ENCODE measurements at regions of chr6 and their contacts with region 1.

Region 1: GRCh38 chr6:28863604-28864320 is 60.0 kb downstream of the TRIM27 start:
- DNase-seq: peak; percentile 72
- ATAC-seq: peak; percentile 47
- H3K4me3 ChIP-seq: peak overlapping the region; percentile 62 to 78 (median 63)
- H3K27ac ChIP-seq: peak overlapping the region; percentile 56
- H3K4me1 ChIP-seq: peaks cover 39% of the 10 kb centered on the region
- H3K27me3 ChIP-seq: peaks cover 0 to 11% of the 10 kb centered on the region in 2 experiments; a peak in 4 of 5 replicates
- CTCF ChIP-seq: no peak; the same call in 1 of the 2 replicates
- EP300 ChIP-seq: no peak
- POLR2A ChIP-seq: 0 out of 4 replicates have a peak, but pooled peaks of 1 of the 2 experiments have one; percentile 31
- RAD21 ChIP-seq: peak; percentile 14; the same call in 1 of the 2 replicates

Region 2: GRCh38 chr6:28880894-28881780 is 17.4 kb after region 1 on chr6:
- CTCF ChIA-PET with region 1: no interaction called
- POLR2A ChIA-PET with region 1: interaction called, 26 read pairs
- in situ Hi-C with region 1: no loop called
- intact Hi-C with region 1: loop called (anchors 2 kb)
- DNase-seq: peak; percentile 82
- ATAC-seq: peak; percentile 27
- H3K4me3 ChIP-seq: peak overlapping the region; percentile 38 to 63 (median 59)
- H3K27ac ChIP-seq: no peak overlapping the region
- H3K4me1 ChIP-seq: peaks cover 62% of the 10 kb centered on the region
- H3K27me3 ChIP-seq: no peaks in the 10 kb centered on the region
- CTCF ChIP-seq: no peak
- EP300 ChIP-seq: no peak
- POLR2A ChIP-seq: no peak
- RAD21 ChIP-seq: no peak

Region 3: GRCh38 chr6:28895134-28895812 is 31.5 kb after region 1 on chr6:
- CTCF ChIA-PET with region 1: no interaction called
- POLR2A ChIA-PET with region 1: interaction called, 44 read pairs
- in situ Hi-C with region 1: no loop called
- intact Hi-C with region 1: loop called (anchors 2 kb)
- DNase-seq: peak; percentile 98
- ATAC-seq: peak; percentile 86
- H3K4me3 ChIP-seq: peak overlapping the region; percentile 82 to 97 (median 86)
- H3K27ac ChIP-seq: peak overlapping the region; percentile 93
- H3K4me1 ChIP-seq: peaks cover 40% of the 10 kb centered on the region
- H3K27me3 ChIP-seq: no peaks in the 10 kb centered on the region; a peak in 1 of 5 replicates
- CTCF ChIP-seq: no peak
- EP300 ChIP-seq: no peak
- POLR2A ChIP-seq: peak; percentile 90 to 95
- RAD21 ChIP-seq: no peak

Region 4: DNA sequence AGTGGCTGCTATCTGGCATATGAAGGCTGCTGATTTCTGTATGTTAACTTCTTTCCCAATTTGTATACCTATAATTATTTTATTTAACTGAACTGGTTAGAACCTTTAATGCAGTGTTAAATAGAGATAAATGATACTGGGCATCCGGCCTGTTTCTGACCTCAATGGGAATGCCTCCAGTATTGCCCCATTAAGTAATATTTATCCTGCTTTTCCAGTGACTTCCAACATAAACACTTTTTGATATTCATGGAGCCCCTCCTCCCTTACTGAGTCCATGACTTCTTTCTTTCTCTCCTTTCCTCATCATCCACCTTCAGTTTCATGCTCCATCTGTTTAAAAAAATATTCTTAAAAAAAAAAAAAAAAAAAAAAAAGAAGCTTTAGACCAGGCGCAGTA is 51.2 kb after region 1 on chr6:
- CTCF ChIA-PET with region 1: no interaction called
- POLR2A ChIA-PET with region 1: no interaction called
- in situ Hi-C with region 1: no loop called
- intact Hi-C with region 1: no loop called
- DNase-seq: no peak
- ATAC-seq: no peak
- H3K4me3 ChIP-seq: no peak overlapping the region
- H3K27ac ChIP-seq: no peak overlapping the region
- H3K4me1 ChIP-seq: peaks cover 25% of the 10 kb centered on the region
- H3K27me3 ChIP-seq: no peaks in the 10 kb centered on the region
- CTCF ChIP-seq: no peak
- EP300 ChIP-seq: no peak
- POLR2A ChIP-seq: no peak
- RAD21 ChIP-seq: no peak

Region 5: GRCh38 chr6:28981833-28982475 is 118.2 kb after region 1 on chr6:
- CTCF ChIA-PET with region 1: no interaction called
- POLR2A ChIA-PET with region 1: interaction called, 13 read pairs
- in situ Hi-C with region 1: no loop called
- intact Hi-C with region 1: loop called (anchors 1 kb)
- DNase-seq: peak; percentile 98
- ATAC-seq: peak; percentile 26
- H3K4me3 ChIP-seq: peak overlapping the region; percentile 71 to 97 (median 83)
- H3K27ac ChIP-seq: peak overlapping the region; percentile 98
- H3K4me1 ChIP-seq: peaks cover 62% of the 10 kb centered on the region
- H3K27me3 ChIP-seq: no peaks in the 10 kb centered on the region; a peak in 2 of 5 replicates
- CTCF ChIP-seq: peak; percentile 63
- EP300 ChIP-seq: 0 out of 4 replicates have a peak, but pooled peaks of 1 of the 2 experiments have one; percentile 13
- POLR2A ChIP-seq: no peak
- RAD21 ChIP-seq: peak; percentile 27; the same call in 1 of the 2 replicates

Region 6: GRCh38 chr6:29016559-29017427 is 153.0 kb after region 1 on chr6:
- CTCF ChIA-PET with region 1: interaction called, 4 read pairs
- POLR2A ChIA-PET with region 1: interaction called, 17 read pairs
- in situ Hi-C with region 1: loop called (anchors 10 kb)
- intact Hi-C with region 1: no loop called
- DNase-seq: peak; percentile 80
- ATAC-seq: peak; percentile 90
- H3K4me3 ChIP-seq: peak overlapping the region; percentile 67 to 82 (median 70)
- H3K27ac ChIP-seq: peak overlapping the region; percentile 15
- H3K4me1 ChIP-seq: peaks cover 22% of the 10 kb centered on the region
- H3K27me3 ChIP-seq: no peaks in the 10 kb centered on the region; a peak in 2 of 5 replicates
- CTCF ChIP-seq: peak; percentile 82
- EP300 ChIP-seq: no peak
- POLR2A ChIP-seq: no peak
- RAD21 ChIP-seq: peak; percentile 81

Region 7: GRCh38 chr6:29887819-29888776 is 1024.3 kb after region 1 on chr6:
- CTCF ChIA-PET with region 1: no interaction called
- POLR2A ChIA-PET with region 1: no interaction called
- in situ Hi-C with region 1: no loop called
- intact Hi-C with region 1: loop called (anchors 5 kb)
- DNase-seq: no peak
- ATAC-seq: peak; percentile 31
- H3K4me3 ChIP-seq: peak overlapping the region; percentile 62 to 75 (median 65); a peak in 5 of 6 replicates
- H3K27ac ChIP-seq: no peak overlapping the region
- H3K4me1 ChIP-seq: peaks cover 11% of the 10 kb centered on the region
- H3K27me3 ChIP-seq: no peaks in the 10 kb centered on the region
- CTCF ChIP-seq: no peak
- EP300 ChIP-seq: no peak
- POLR2A ChIP-seq: no peak
- RAD21 ChIP-seq: no peak